Caco-2 (cell line): ENCODE measurements at regions of chr2 and their contacts with region 1.

Region 1: DNA sequence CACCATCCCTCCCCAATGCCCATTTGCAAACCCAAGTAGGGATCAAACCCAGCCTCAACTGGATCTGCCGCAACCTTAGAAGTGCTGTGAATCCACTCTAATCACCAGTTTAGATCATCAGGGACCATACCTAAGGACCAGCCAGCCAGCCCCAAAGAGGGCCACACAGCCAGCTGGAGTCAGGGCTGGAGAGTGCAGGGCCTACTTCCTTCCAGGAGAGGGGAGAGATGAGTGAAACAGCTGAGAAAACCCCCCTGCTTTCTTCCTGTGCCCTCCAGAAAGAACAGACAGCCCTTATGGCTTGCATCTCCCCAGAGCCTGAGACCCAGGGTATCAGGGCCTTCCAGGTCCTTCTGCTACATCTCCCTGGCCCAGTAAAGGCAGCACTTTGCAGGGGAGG is 25.8 kb downstream of the YPEL5 start:
- DNase-seq: no peak
- H3K4me3 ChIP-seq: no peak overlapping the region
- H3K4me3 Mint-ChIP-seq: no peak overlapping the region
- H3K27ac Mint-ChIP-seq: no peak overlapping the region
- H3K4me1 ChIP-seq: no peaks in the 10 kb centered on the region
- H3K4me1 Mint-ChIP-seq: no peaks in the 10 kb centered on the region
- H3K27me3 ChIP-seq: no peaks in the 10 kb centered on the region
- H3K27me3 Mint-ChIP-seq: no peaks in the 10 kb centered on the region
- CTCF ChIP-seq: peak in 1 of 2 experiments; percentile 1

Region 2: GRCh38 chr2:30201990-30202389 is 29.4 kb after region 1 on chr2:
- CTCF ChIA-PET with region 1: no interaction called
- POLR2A ChIA-PET with region 1: interaction called, 14 read pairs
- intact Hi-C with region 1: no loop called
- DNase-seq: no peak
- H3K4me3 ChIP-seq: no peak overlapping the region
- H3K4me3 Mint-ChIP-seq: no peak overlapping the region
- H3K27ac Mint-ChIP-seq: no peak overlapping the region
- H3K4me1 ChIP-seq: no peaks in the 10 kb centered on the region
- H3K4me1 Mint-ChIP-seq: no peaks in the 10 kb centered on the region
- H3K27me3 ChIP-seq: no peaks in the 10 kb centered on the region
- H3K27me3 Mint-ChIP-seq: no peaks in the 10 kb centered on the region
- CTCF ChIP-seq: no peak